Mammary epithelial cell (primary cell): ENCODE measurements at regions of chr7 and their contacts with region 1.

Region 1: GRCh38 chr7:149714050-149714909 is 59.1 kb downstream of the ZNF467 start:
- DNase-seq: peak; percentile 84
- H3K4me3 ChIP-seq: peak overlapping the region; percentile 70 to 80 (median 74)
- H3K27ac ChIP-seq: no peak overlapping the region
- H3K4me1 ChIP-seq: peaks cover 32% of the 10 kb centered on the region
- H3K27me3 ChIP-seq: no peaks in the 10 kb centered on the region
- CTCF ChIP-seq: no peak

Region 2: DNA sequence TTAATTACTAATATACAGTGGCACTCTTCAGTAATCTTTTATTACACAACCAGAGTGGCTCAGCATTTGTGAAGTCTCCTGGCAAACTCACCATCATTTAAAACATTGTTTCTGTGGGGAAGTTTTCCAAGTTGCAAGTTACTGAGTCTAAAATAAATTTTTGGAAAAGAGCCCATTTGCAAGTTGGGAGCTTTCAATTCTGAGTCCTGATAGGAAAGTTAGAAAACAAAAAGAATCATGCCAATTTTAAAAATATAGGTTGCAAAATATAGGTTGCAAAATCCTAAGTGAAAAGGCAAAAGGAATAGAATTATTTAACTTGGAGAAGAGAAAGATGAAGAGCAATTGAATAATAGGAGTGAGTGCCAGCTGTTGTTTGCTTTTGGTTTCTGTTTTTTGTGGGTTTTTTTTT is 1502.5 kb before region 1 on chr7:
- CTCF ChIA-PET with region 1: no interaction called
- dilution Hi-C with region 1: no loop called
- in situ Hi-C with region 1: no loop called
- intact Hi-C with region 1: no loop called
- DNase-seq: no peak
- H3K4me3 ChIP-seq: no peak overlapping the region
- H3K27ac ChIP-seq: no peak overlapping the region
- H3K4me1 ChIP-seq: no peaks in the 10 kb centered on the region
- H3K27me3 ChIP-seq: no peaks in the 10 kb centered on the region
- CTCF ChIP-seq: no peak

Region 3: DNA sequence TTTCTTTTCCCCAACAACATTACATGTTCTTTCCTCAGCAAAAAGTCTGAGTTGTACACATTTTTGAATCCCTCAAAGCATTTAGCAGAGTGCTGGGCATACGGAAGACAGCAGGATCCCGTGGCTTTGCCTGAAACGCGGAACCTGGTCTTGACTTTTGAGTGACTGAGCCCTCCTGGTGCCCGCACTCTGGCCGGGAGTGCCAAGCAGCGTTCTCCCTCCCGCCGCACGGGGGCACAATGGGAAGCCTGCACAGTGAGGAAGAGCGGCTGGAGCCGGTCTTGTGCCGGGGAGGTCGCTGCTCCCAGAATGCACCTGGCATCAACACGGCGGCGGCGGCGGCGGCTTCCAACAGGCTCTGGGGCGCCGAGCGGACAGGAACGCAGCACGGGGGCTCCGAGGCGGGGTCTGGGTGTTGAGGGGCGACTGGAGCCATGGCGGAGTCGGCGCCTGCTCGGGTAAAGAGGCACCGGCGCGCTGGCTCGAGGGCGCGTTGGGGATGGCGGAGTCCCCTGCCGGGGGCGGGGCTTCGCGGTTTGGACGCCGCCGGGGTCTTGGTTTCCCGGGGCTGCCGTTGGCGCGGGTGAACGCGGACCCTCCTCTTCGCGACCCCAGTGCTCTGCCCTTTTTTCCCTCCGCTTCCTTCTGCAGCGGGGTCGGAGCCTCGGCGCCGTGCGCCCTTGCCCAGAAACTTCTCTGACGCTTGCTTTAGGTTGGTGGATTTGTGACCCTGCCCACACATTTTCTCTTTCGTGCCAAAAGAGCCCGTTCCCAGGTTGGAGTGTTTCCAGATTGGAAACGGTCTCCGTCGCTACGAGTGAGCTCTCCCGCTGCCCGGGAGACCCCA is 474.7 kb before region 1 on chr7 and contains the start of gene ZNF212:
- CTCF ChIA-PET with region 1: no interaction called
- dilution Hi-C with region 1: no loop called
- in situ Hi-C with region 1: no loop called
- intact Hi-C with region 1: no loop called
- DNase-seq: peak; percentile 85
- H3K4me3 ChIP-seq: peak within 1 kb of the TSS; percentile 73 to 98 (median 97)
- H3K27ac ChIP-seq: peak within 1 kb of the TSS; percentile 70
- H3K4me1 ChIP-seq: peaks cover 22% of the 10 kb centered on the region
- H3K27me3 ChIP-seq: no peaks in the 10 kb centered on the region
- CTCF ChIP-seq: peak; percentile 88 to 89
- total RNA-seq, gene ZNF212: 9.2 to 11.1 TPM

Region 4: DNA sequence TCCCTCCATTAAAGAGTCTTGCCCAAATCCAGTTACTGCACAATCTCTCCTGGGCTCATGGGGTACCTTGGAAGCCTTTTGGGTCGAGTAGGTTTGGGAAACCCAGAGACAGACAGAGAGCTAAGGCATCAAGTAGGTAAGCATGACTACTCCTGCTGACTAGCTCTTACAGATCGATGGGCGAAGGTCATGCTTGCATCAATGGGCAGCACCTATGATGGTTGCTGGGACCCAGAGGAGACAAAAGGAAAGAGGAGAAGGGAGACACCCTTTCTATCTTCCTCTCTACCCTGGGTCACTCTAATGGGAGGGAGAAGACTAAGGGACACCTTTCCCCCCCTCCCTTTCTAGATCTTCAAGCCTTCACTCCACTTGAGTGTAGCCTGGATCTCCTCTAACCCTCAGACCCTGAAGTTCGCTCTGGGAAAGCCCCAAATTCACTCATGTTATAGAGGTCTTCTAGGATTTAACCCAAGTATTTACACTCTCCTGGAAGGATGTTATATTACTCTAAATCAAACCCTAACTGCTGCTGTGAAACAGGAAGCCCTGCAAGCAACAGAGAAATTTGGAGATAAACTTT is 185.1 kb before region 1 on chr7:
- CTCF ChIA-PET with region 1: no interaction called
- dilution Hi-C with region 1: no loop called
- in situ Hi-C with region 1: no loop called
- intact Hi-C with region 1: no loop called
- DNase-seq: no peak
- H3K4me3 ChIP-seq: no peak overlapping the region
- H3K27ac ChIP-seq: no peak overlapping the region
- H3K4me1 ChIP-seq: no peaks in the 10 kb centered on the region
- H3K27me3 ChIP-seq: no peaks in the 10 kb centered on the region
- CTCF ChIP-seq: no peak

Region 5: DNA sequence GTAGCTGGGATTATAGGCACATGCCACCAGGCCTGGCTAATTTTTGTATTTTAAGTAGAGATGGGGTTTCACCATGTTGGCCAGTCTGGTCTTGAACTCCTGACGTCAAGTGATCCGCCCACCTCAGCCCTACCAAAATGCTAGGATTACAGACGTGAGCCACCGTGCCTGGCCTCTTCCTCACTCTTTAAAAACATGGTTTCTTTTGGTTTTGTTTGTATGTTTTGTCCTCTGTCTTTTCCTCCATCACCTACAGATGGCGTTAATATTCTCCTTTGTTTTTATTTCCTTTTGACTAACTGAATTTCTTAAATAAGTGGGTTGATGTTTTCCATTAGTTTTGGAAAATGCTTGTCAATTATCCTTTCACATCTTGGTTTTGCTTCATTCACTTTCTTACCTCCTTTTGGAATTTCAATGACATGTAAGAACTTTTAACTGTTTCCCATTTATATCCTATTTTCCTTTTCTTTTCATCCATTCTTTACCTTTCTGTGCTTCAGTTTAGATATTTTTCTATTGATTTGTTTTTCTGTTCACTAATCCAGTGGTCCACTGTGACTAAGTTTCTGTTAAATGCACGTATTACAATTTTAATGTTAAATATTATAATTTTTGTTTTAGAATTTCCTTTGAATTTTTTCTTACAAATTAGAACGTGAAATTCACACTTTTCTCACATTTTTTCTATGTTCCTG is 45.0 kb before region 1 on chr7:
- CTCF ChIA-PET with region 1: no interaction called
- dilution Hi-C with region 1: no loop called
- in situ Hi-C with region 1: no loop called
- intact Hi-C with region 1: loop called (anchors 1 kb)
- DNase-seq: peak; percentile 44
- H3K4me3 ChIP-seq: no peak overlapping the region
- H3K27ac ChIP-seq: no peak overlapping the region
- H3K4me1 ChIP-seq: no peaks in the 10 kb centered on the region
- H3K27me3 ChIP-seq: no peaks in the 10 kb centered on the region
- CTCF ChIP-seq: peak; percentile 40 to 52

Region 6: GRCh38 chr7:149680331-149681025 is 33.8 kb before region 1 on chr7:
- CTCF ChIA-PET with region 1: no interaction called
- dilution Hi-C with region 1: loop called (anchors 5 kb)
- in situ Hi-C with region 1: no loop called
- intact Hi-C with region 1: no loop called
- DNase-seq: no peak
- H3K4me3 ChIP-seq: no peak overlapping the region
- H3K27ac ChIP-seq: no peak overlapping the region
- H3K4me1 ChIP-seq: no peaks in the 10 kb centered on the region
- H3K27me3 ChIP-seq: no peaks in the 10 kb centered on the region
- CTCF ChIP-seq: no peak

Region 7: GRCh38 chr7:149690688-149691446 is 23.4 kb before region 1 on chr7:
- CTCF ChIA-PET with region 1: interaction called, 3 read pairs
- dilution Hi-C with region 1: no loop called
- in situ Hi-C with region 1: no loop called
- intact Hi-C with region 1: loop called (anchors 2 kb)
- DNase-seq: peak; percentile 96
- H3K4me3 ChIP-seq: peak overlapping the region in 1 of 3 experiments; percentile 42
- H3K27ac ChIP-seq: no peak overlapping the region
- H3K4me1 ChIP-seq: no peaks in the 10 kb centered on the region
- H3K27me3 ChIP-seq: peaks cover 2% of the 10 kb centered on the region
- CTCF ChIP-seq: no peak

Region 8: GRCh38 chr7:149759111-149759860 is 45.0 kb after region 1 on chr7:
- CTCF ChIA-PET with region 1: no interaction called
- dilution Hi-C with region 1: no loop called
- in situ Hi-C with region 1: no loop called
- intact Hi-C with region 1: no loop called
- DNase-seq: no peak
- H3K4me3 ChIP-seq: no peak overlapping the region
- H3K27ac ChIP-seq: no peak overlapping the region
- H3K4me1 ChIP-seq: no peaks in the 10 kb centered on the region
- H3K27me3 ChIP-seq: no peaks in the 10 kb centered on the region
- CTCF ChIP-seq: no peak